Panc1 (cell line): ENCODE measurements at regions of chr6 and their contacts with region 1.

Region 1: DNA sequence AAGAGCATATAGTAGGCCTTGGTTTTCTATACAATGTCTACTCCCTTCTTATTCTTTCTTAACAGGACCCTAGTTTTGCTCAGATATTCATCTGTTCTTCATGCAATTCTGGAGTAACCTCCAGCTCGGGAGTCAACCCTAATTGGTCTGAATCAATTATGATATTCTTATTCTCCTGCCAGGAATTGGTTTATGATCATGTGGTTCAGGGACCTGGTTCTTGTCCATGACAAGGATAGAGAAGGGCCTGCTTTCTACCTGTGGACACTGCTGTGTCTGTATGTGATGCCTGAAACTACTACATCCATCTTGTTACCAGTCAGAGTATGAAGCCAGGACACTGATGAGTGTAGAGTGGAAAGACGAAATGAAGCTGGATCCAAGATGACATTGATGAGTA is 24.4 kb upstream of the FAM184A start:
- DNase-seq: no peak
- ATAC-seq: no peak
- H3K4me3 ChIP-seq: no peak overlapping the region
- H3K27ac ChIP-seq: no peak overlapping the region
- H3K4me1 ChIP-seq: no peaks in the 10 kb centered on the region
- H3K27me3 ChIP-seq: no peaks in the 10 kb centered on the region
- CTCF ChIP-seq: no peak

Region 2: GRCh38 chr6:118789419-118789818 is 313.5 kb before region 1 on chr6:
- CTCF ChIA-PET with region 1: no interaction called
- POLR2A ChIA-PET with region 1: interaction called, 13 read pairs
- in situ Hi-C with region 1: no loop called
- intact Hi-C with region 1: no loop called
- DNase-seq: no peak
- ATAC-seq: no peak
- H3K4me3 ChIP-seq: no peak overlapping the region
- H3K27ac ChIP-seq: no peak overlapping the region
- H3K4me1 ChIP-seq: no peaks in the 10 kb centered on the region
- H3K27me3 ChIP-seq: no peaks in the 10 kb centered on the region
- CTCF ChIP-seq: no peak